ENCODE measurements at regions of chr12 and their contacts with region 1.

Region 1: GRCh38 chr12:124188561-124189405 is 106.1 kb upstream of the RFLNA start:
- DNase-seq: peak; percentile 41
- H3K4me3 ChIP-seq: no peak overlapping the region
- H3K27ac ChIP-seq: no peak overlapping the region
- H3K4me1 ChIP-seq: peaks cover 14% of the 10 kb centered on the region
- H3K27me3 ChIP-seq: no peaks in the 10 kb centered on the region
- CTCF ChIP-seq: no peak
- POLR2A ChIP-seq: no peak

Region 2: GRCh38 chr12:122999986-123000420 is 1188.8 kb before region 1 on chr12:
- CTCF ChIA-PET with region 1: no interaction called
- POLR2A ChIA-PET with region 1: no interaction called
- dilution Hi-C with region 1: no loop called
- intact Hi-C with region 1: loop called (anchors 10 kb)
- DNase-seq: no peak
- H3K4me3 ChIP-seq: no peak overlapping the region
- H3K27ac ChIP-seq: no peak overlapping the region
- H3K4me1 ChIP-seq: no peaks in the 10 kb centered on the region
- H3K27me3 ChIP-seq: no peaks in the 10 kb centered on the region
- CTCF ChIP-seq: no peak
- POLR2A ChIP-seq: no peak